IMR-90 (cell line): ENCODE measurements at regions of chr1 and their contacts with region 1.

Region 1: GRCh38 chr1:171141688-171142415 is 43.2 kb upstream of the FMO2 start:
- DNase-seq: peak; percentile 96
- ATAC-seq: peak; percentile 93
- H3K4me3 ChIP-seq: no peak overlapping the region
- H3K27ac ChIP-seq: peak overlapping the region; percentile 86
- H3K4me1 ChIP-seq: peaks cover 13% of the 10 kb centered on the region
- H3K27me3 ChIP-seq: no peaks in the 10 kb centered on the region
- CTCF ChIP-seq: peak; percentile 44
- POLR2A ChIP-seq: no peak
- RAD21 ChIP-seq: no peak; the same call in 1 of the 2 replicates

Region 2: DNA sequence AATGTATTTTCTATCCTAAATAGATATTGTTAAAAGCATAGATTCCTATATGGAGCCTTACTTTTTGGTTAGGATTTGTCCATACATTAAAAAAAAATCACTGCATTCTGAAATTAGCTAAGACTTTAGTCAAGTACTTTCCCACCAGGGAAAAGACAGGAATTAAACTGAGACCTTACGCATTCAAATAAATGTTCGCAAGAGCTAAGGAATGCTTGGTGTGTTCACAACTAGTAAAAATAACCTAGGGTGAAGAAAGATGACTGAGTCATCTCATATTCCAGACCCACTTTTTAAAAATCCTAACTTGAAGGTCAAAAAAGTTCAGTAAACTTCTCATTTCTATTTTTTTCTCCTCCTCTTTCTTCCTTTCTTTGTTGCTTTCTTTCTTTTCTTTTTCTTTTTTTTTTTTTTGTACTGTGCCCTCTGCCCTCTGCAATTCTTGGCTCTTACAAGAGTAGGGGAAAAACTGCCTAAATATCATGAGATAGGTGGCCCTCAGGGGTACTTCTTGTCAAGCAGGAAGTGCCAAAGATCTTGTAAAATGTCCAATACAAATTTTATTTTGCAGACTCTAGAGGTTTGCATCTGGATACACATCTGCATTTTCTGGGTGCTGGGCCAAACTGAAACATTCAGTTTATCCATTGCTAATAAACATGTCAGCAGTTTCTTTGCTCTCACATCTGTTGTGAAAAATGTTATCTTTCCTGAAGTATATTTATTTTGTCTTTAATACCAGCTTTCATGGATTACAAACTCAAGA is 731.3 kb before region 1 on chr1:
- CTCF ChIA-PET with region 1: no interaction called
- POLR2A ChIA-PET with region 1: no interaction called
- dilution Hi-C with region 1: no loop called
- in situ Hi-C with region 1: no loop called
- intact Hi-C with region 1: no loop called
- DNase-seq: peak; percentile 86
- ATAC-seq: peak; percentile 78
- H3K4me3 ChIP-seq: no peak overlapping the region
- H3K27ac ChIP-seq: peak overlapping the region; percentile 95; the same call in 1 of the 2 replicates
- H3K4me1 ChIP-seq: peaks cover 8% of the 10 kb centered on the region
- H3K27me3 ChIP-seq: no peaks in the 10 kb centered on the region
- CTCF ChIP-seq: no peak
- POLR2A ChIP-seq: no peak
- RAD21 ChIP-seq: no peak

Region 3: DNA sequence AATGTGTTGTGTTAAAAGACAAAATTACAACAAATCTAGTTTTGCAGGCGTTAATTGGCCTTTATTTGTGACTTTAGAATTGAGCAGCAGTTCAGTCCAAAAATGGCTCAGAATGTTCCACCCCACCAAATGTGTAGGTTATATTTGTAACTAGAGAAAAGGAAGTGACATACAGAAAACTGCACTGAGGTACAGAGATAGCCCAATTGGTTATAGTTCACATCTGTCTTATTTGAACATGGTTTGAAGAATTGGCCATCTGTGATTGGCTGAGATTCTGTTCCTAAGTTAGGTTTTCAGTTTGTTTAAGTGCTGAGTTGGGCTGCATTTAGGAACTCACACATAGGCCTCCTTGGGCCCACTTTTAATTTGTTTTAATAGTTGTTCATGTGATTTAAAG is 31.2 kb after region 1 on chr1:
- CTCF ChIA-PET with region 1: no interaction called
- POLR2A ChIA-PET with region 1: no interaction called
- dilution Hi-C with region 1: no loop called
- in situ Hi-C with region 1: no loop called
- intact Hi-C with region 1: loop called (anchors 1 kb)
- DNase-seq: no peak
- ATAC-seq: peak; percentile 46
- H3K4me3 ChIP-seq: no peak overlapping the region
- H3K27ac ChIP-seq: peak overlapping the region; percentile 81; the same call in 1 of the 2 replicates
- H3K4me1 ChIP-seq: no peaks in the 10 kb centered on the region; the same call in 1 of the 2 replicates
- H3K27me3 ChIP-seq: no peaks in the 10 kb centered on the region
- CTCF ChIP-seq: no peak
- POLR2A ChIP-seq: no peak
- RAD21 ChIP-seq: no peak

Region 4: GRCh38 chr1:171188388-171189266 is 46.8 kb after region 1 on chr1:
- CTCF ChIA-PET with region 1: interaction called, 3 read pairs
- POLR2A ChIA-PET with region 1: no interaction called
- dilution Hi-C with region 1: no loop called
- in situ Hi-C with region 1: no loop called
- intact Hi-C with region 1: loop called (anchors 1 kb)
- DNase-seq: peak; percentile 65
- ATAC-seq: peak; percentile 80
- H3K4me3 ChIP-seq: no peak overlapping the region
- H3K27ac ChIP-seq: peak overlapping the region; percentile 17; the same call in 1 of the 2 replicates
- H3K4me1 ChIP-seq: peaks cover 2% of the 10 kb centered on the region; the same call in 1 of the 2 replicates
- H3K27me3 ChIP-seq: no peaks in the 10 kb centered on the region
- CTCF ChIP-seq: peak; percentile 73
- POLR2A ChIP-seq: no peak
- RAD21 ChIP-seq: peak; percentile 64

Region 5: GRCh38 chr1:171220581-171221054 is 78.8 kb after region 1 on chr1:
- CTCF ChIA-PET with region 1: interaction called, 4 read pairs
- POLR2A ChIA-PET with region 1: interaction called, 3 read pairs
- dilution Hi-C with region 1: no loop called
- in situ Hi-C with region 1: no loop called
- intact Hi-C with region 1: loop called (anchors 1 kb)
- DNase-seq: peak; percentile 44
- ATAC-seq: peak; percentile 59
- H3K4me3 ChIP-seq: peak overlapping the region; percentile 2; the same call in 1 of the 2 replicates
- H3K27ac ChIP-seq: peak overlapping the region; percentile 97
- H3K4me1 ChIP-seq: peaks cover 18% of the 10 kb centered on the region
- H3K27me3 ChIP-seq: no peaks in the 10 kb centered on the region
- CTCF ChIP-seq: no peak
- POLR2A ChIP-seq: no peak
- RAD21 ChIP-seq: no peak

Region 6: DNA sequence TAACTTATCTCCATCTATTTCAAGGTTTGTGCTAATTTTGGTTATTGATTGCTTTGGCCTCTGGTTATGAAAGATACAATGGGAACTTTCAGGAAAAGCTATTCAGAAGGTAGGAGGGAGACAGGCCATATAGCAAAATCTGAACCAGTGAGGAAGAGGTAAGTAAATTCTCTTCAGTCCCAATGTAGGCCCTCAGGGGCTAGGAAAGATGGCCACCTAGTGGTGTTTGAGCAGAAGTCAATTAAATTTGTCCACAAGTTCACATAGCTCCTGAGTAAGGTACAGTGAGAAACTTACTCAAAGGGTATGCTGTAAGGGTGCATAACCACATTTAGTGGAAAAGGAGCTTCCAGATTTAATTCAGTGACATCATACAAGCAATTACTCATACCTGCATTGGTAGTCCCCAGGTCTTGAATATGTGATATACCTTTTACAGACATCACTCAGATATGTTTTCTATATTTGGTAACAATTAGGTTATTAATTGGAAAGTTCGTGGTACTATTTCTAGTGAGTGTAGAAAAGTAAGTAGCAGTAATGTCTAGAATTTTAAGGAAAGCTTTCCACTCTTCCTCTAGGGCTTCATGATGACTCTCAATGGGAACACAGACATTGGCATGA is 85.0 kb after region 1 on chr1:
- CTCF ChIA-PET with region 1: interaction called, 4 read pairs
- POLR2A ChIA-PET with region 1: interaction called, 3 read pairs
- dilution Hi-C with region 1: no loop called
- in situ Hi-C with region 1: no loop called
- intact Hi-C with region 1: loop called (anchors 1 kb)
- DNase-seq: peak; percentile 80
- ATAC-seq: peak; percentile 93
- H3K4me3 ChIP-seq: no peak overlapping the region
- H3K27ac ChIP-seq: no peak overlapping the region
- H3K4me1 ChIP-seq: peaks cover 2% of the 10 kb centered on the region
- H3K27me3 ChIP-seq: no peaks in the 10 kb centered on the region
- CTCF ChIP-seq: peak; percentile 95
- POLR2A ChIP-seq: no peak
- RAD21 ChIP-seq: peak; percentile 99